Common myeloid progenitor, CD34-positive (primary cell): ENCODE measurements at regions of chr15 and their contacts with region 1.

Region 1: DNA sequence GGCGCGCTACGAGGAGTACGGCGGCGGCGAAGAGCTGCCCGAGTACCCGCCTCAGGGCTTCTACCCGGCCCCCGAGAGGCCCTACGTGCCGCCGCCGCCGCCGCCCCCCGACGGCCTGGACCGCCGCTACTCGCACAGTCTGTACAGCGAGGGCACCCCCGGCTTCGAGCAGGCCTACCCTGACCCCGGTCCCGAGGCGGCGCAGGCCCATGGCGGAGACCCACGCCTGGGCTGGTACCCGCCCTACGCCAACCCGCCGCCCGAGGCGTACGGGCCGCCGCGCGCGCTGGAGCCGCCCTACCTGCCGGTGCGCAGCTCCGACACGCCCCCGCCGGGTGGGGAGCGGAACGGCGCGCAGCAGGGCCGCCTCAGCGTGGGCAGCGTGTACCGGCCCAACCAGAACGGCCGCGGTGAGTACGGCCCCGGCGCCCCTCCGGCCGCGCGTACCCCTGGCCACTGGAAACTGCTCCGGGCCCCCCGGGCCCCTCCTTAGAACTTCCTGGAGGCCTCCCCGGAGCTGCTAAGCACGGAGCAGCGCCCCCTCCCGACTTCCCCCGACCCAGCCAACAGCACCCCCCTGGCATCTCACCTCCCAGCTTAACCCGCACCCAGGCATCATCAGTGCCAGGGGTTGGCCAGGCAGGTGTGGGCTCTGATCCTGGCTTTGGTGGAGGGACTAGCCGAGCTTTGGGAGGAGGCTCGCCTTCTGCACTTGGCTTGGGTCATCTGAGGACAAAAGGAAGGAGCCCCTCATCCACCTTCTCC is 1.4 kb downstream of the LOXL1 start:
- DNase-seq: peak; percentile 63 to 87 (median 83)
- H3K4me3 ChIP-seq: peak overlapping the region; percentile 28 to 76 (median 68)
- H3K27ac ChIP-seq: no peak overlapping the region
- H3K4me1 ChIP-seq: peaks cover 2 to 72% (median 57%) of the 10 kb centered on the region in 4 experiments
- H3K27me3 ChIP-seq: no peaks in the 10 kb centered on the region

Region 2: GRCh38 chr15:73873889-73874511 is 53.7 kb before region 1 on chr15:
- CTCF ChIA-PET with region 1: interaction called, 20 read pairs
- POLR2A ChIA-PET with region 1: no interaction called
- DNase-seq: peak; percentile 70 to 81 (median 74)
- H3K4me3 ChIP-seq: no peak overlapping the region
- H3K27ac ChIP-seq: no peak overlapping the region
- H3K4me1 ChIP-seq: peaks cover 0 to 13% (median 10%) of the 10 kb centered on the region in 4 experiments
- H3K27me3 ChIP-seq: peaks cover 0 to 10% (median 4%) of the 10 kb centered on the region in 5 experiments

Region 3: GRCh38 chr15:73897441-73898261 is 30.0 kb before region 1 on chr15:
- CTCF ChIA-PET with region 1: interaction called, 10 read pairs
- POLR2A ChIA-PET with region 1: no interaction called
- DNase-seq: peak; percentile 36 to 56 (median 51)
- H3K4me3 ChIP-seq: no peak overlapping the region
- H3K27ac ChIP-seq: no peak overlapping the region
- H3K4me1 ChIP-seq: no peaks in the 10 kb centered on the region
- H3K27me3 ChIP-seq: no peaks in the 10 kb centered on the region

Region 4: GRCh38 chr15:73914145-73914544 is 13.5 kb before region 1 on chr15:
- CTCF ChIA-PET with region 1: interaction called, 50 read pairs
- POLR2A ChIA-PET with region 1: interaction called, 6 read pairs
- DNase-seq: peak; percentile 73 to 92 (median 83)
- H3K4me3 ChIP-seq: no peak overlapping the region
- H3K27ac ChIP-seq: no peak overlapping the region
- H3K4me1 ChIP-seq: peaks cover 3 to 24% (median 18%) of the 10 kb centered on the region in 4 experiments
- H3K27me3 ChIP-seq: no peaks in the 10 kb centered on the region